IMR-90 (cell line): ENCODE measurements at regions of chr5 and their contacts with region 1.

Region 1: DNA sequence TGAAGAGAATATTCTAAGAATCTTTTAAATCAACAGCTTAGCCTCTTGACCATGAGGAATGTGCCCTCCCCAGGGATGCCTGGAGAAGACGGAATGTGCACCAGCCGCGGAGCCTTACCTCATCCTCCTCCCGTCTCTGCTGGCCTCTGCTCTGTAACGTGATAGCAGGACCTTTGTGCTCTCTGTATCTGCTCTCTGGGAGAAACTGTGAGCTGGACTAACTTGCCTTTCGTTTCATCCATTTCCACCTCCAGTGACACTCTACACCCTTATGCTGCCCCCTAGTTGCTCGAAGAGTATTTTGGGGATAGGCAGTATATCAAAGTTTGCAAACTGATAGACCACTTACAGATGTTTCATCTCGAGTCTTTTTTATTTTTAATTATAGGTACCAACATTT is 141.4 kb downstream of the NPR3 start:
- DNase-seq: peak; percentile 89
- ATAC-seq: peak; percentile 97
- H3K4me3 ChIP-seq: no peak overlapping the region
- H3K27ac ChIP-seq: no peak overlapping the region
- H3K4me1 ChIP-seq: peaks cover 8% of the 10 kb centered on the region; the same call in 1 of the 2 replicates
- H3K27me3 ChIP-seq: no peaks in the 10 kb centered on the region
- CTCF ChIP-seq: peak; percentile 55
- POLR2A ChIP-seq: no peak
- RAD21 ChIP-seq: peak; percentile 60

Region 2: GRCh38 chr5:32613050-32613672 is 239.4 kb before region 1 on chr5:
- CTCF ChIA-PET with region 1: no interaction called
- POLR2A ChIA-PET with region 1: no interaction called
- dilution Hi-C with region 1: no loop called
- in situ Hi-C with region 1: no loop called
- intact Hi-C with region 1: no loop called
- DNase-seq: peak; percentile 75
- ATAC-seq: peak; percentile 87
- H3K4me3 ChIP-seq: no peak overlapping the region
- H3K27ac ChIP-seq: no peak overlapping the region
- H3K4me1 ChIP-seq: peaks cover 3% of the 10 kb centered on the region
- H3K27me3 ChIP-seq: no peaks in the 10 kb centered on the region
- CTCF ChIP-seq: peak; percentile 91
- POLR2A ChIP-seq: 0 out of 2 replicates have a peak, but pooled peaks have one; percentile 29
- RAD21 ChIP-seq: peak; percentile 93

Region 3: GRCh38 chr5:32767948-32768427 is 84.5 kb before region 1 on chr5:
- CTCF ChIA-PET with region 1: no interaction called
- POLR2A ChIA-PET with region 1: no interaction called
- dilution Hi-C with region 1: no loop called
- in situ Hi-C with region 1: no loop called
- intact Hi-C with region 1: loop called (anchors 5 kb)
- DNase-seq: peak; percentile 99
- ATAC-seq: peak; percentile 94
- H3K4me3 ChIP-seq: no peak overlapping the region
- H3K27ac ChIP-seq: peak overlapping the region; percentile 94
- H3K4me1 ChIP-seq: peaks cover 16% of the 10 kb centered on the region
- H3K27me3 ChIP-seq: no peaks in the 10 kb centered on the region
- CTCF ChIP-seq: no peak
- POLR2A ChIP-seq: no peak
- RAD21 ChIP-seq: no peak

Region 4: DNA sequence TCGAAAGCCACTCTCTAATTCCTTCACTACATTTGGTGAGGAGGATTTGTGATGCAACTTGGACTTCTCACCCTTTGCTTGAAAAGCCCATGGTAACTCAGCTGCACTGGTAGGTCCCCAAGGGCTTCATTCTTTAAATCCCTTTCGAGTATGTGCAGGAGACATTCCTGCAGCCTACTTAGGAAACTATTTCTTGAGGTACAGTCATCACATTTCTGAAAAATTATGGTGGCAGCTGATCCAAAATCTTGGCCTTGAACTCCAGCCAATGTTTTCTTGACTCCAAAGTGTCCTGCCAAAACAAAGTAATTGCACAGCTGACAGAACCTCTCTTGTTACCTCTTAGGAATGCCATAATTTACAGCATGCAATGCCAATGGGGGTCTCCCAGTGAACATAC is 41.7 kb before region 1 on chr5:
- CTCF ChIA-PET with region 1: no interaction called
- POLR2A ChIA-PET with region 1: no interaction called
- dilution Hi-C with region 1: no loop called
- in situ Hi-C with region 1: no loop called
- intact Hi-C with region 1: loop called (anchors 2 kb)
- DNase-seq: peak; percentile 68
- ATAC-seq: peak; percentile 65
- H3K4me3 ChIP-seq: no peak overlapping the region
- H3K27ac ChIP-seq: peak overlapping the region; percentile 82; the same call in 1 of the 2 replicates
- H3K4me1 ChIP-seq: peaks cover 10% of the 10 kb centered on the region
- H3K27me3 ChIP-seq: no peaks in the 10 kb centered on the region
- CTCF ChIP-seq: no peak
- POLR2A ChIP-seq: no peak
- RAD21 ChIP-seq: no peak

Region 5: DNA sequence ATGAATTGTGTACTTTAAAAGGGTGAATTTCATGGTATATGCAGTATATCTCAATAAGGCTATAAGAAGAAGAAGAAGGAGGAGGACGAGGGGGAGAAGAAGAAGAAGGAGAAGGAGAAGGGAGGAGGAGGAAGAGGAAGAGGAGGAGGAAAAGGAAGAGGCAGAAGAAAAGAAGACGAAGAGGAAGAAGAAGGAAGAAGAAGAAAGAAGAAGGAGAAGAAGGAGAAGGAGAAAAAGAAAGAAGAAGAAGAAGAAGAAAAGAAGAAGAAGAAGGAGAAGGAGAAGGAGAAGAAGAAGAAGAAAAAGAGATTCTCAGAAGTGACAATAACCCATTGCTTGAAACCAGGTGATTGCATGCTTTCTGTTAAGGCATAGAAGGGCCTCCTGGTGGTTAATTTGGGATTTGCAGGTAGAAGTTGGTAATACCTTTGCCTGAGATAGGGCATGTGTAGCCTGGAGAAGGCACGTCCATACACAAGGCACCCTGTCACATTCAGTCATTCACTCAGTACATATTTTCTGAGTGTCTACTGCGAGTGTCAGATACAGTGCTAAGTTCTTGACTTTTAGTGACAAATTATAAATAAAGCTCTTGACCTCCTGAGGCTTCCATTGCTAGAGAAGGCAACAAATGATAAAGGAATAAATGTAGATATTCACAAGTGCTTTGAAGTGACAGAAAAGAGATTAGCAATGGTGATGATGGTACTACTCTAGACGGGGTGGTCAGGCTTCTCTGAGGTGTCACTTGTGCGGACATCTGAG is 89.9 kb after region 1 on chr5:
- CTCF ChIA-PET with region 1: no interaction called
- POLR2A ChIA-PET with region 1: no interaction called
- dilution Hi-C with region 1: no loop called
- in situ Hi-C with region 1: no loop called
- intact Hi-C with region 1: no loop called
- DNase-seq: peak; percentile 13
- ATAC-seq: no peak
- H3K4me3 ChIP-seq: no peak overlapping the region
- H3K27ac ChIP-seq: no peak overlapping the region
- H3K4me1 ChIP-seq: no peaks in the 10 kb centered on the region
- H3K27me3 ChIP-seq: no peaks in the 10 kb centered on the region
- CTCF ChIP-seq: peak; percentile 21; the same call in 1 of the 2 replicates
- POLR2A ChIP-seq: no peak
- RAD21 ChIP-seq: peak; percentile 30